ENCODE measurements at regions of chr6 and their contacts with region 1.

Region 1: GRCh38 chr6:55953335-55953734 is 77.9 kb upstream of the BMP5 start:
- DNase-seq: no peak
- ATAC-seq: peak; percentile 71 to 77

Region 2: DNA sequence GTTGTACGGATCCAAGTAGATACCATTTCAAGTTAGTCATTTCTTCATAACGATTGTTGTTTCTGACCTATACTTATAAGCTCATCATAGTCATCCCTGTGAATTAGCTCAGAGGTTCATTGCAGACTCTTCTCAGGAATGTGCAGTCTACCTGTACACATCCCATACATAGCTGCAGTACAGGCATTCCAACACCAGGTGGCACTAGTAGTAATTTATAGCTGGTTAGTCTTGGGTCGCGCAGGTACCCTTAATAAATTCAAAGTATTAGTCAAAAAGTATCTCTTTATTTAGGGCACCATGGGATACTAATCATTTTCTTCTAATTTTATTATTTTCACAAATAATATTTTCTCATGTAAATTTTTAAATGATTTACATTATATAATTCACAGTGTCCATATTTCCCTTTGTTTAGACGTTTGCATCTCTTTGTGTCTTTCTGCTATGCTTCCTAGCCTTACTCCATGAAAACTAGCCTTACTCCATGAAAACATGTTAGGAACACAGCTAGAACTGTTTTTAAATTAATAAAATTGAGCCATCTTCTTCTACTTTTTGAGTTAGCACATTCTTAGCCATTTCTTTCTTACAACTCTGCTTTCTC is 1235.4 kb before region 1 on chr6:
- intact Hi-C with region 1: loop called in 1 of 2 experiments (anchors 10 kb)
- DNase-seq: peak; percentile 26
- ATAC-seq: peak in 1 of 2 donors; percentile 49

Region 3: DNA sequence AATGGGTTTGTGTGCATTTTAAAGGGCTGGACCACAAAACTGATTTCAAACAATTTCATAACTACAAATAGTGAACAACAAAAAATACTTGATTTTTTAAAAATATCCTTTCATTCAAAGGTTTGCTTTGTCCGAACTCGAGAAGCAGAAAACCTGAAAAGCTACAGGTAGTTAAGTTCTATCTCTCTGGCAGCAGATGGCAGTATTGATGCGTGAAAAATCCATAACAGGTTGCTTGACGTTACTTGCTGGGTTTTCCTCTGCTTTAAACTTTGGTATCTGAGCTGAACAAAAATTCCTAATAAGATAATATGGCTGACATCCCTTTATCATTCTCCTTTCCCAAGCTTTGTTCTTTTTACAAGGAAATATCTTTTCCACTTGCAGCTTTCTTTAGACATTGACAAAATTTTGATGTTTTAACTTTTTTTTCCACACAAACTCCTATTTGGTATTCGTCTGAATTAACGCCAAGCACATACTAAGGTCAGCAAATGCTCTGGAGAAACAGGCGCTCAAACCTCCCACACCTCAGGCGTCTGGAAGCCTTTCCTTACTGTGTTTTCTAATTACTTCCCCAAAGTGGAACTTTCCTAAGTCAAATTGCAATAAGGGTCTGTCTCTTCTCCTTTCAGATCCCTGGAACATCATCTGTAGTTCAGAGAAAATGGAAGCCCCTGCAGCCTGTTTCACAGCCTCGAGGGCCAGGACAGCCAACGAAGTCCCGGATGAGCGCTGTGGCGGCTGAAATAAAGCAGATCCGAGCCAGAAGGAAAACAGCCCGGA is 676.4 kb before region 1 on chr6:
- intact Hi-C with region 1: loop called (anchors 5 to 10 kb)
- DNase-seq: peak; percentile 33
- ATAC-seq: peak; percentile 78 to 91

Region 4: GRCh38 chr6:55433446-55434130 is 519.7 kb before region 1 on chr6:
- intact Hi-C with region 1: loop called in 1 of 2 experiments (anchors 10 kb)
- DNase-seq: no peak
- ATAC-seq: no peak

Region 5: GRCh38 chr6:55445648-55446204 is 507.6 kb before region 1 on chr6:
- intact Hi-C with region 1: loop called in 1 of 2 experiments (anchors 5 kb)
- DNase-seq: no peak
- ATAC-seq: no peak

Region 6: DNA sequence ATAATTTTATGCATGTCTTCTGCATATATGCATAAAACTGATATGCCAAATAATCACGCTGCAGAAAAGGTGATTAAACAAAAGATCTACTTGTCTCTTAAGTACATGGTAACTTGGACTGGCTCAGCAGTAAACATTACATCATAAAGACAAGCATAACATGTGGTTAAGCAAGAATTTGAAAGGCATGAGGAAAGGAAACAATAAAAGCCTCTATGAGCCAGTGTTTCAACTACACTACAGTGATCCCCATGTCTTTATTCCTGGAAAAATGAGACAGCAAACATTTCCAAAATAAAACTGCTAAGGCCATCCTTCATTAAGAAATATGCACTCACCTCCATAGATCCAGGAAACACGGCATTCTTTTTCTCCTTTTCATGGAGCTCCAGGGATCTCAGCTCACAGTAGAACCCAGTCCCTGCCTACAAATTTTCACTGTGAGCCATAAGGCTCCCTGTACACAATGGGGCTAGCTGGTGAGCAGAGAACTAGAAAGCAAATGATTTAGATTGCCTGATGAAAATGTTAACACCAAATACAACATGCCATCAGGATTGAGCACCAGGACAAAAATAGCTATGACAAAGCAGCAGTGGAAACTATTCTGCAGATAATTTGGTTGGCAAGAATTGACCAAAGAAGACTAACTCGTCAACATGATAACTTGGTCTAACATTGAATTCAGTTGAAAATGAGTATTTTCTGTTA is 138.0 kb after region 1 on chr6:
- intact Hi-C with region 1: no loop called
- DNase-seq: no peak
- ATAC-seq: peak; percentile 63 to 68

Measured in left cardiac atrium (tissue), 4 donors.